ENCODE measurements at regions of chr1 and their contacts with region 1.

Region 1: GRCh38 chr1:228174482-228175375 is 9.1 kb downstream of the IBA57 start:
- DNase-seq: peak in 1 of 2 donors; percentile 66
- H3K4me3 ChIP-seq: no peak overlapping the region
- H3K27ac ChIP-seq: no peak overlapping the region
- H3K4me1 ChIP-seq: peaks cover 0 to 9% (median 3%) of the 10 kb centered on the region in 4 donors
- H3K27me3 ChIP-seq: no peaks in the 10 kb centered on the region
- CTCF ChIP-seq: no peak

Region 2: GRCh38 chr1:228275739-228276421 is 101.2 kb after region 1 on chr1:
- intact Hi-C with region 1: loop called (anchors 10 kb)
- DNase-seq: peak; percentile 92 to 93
- H3K4me3 ChIP-seq: peak overlapping the region; percentile 56 to 84
- H3K27ac ChIP-seq: peak overlapping the region; percentile 68 to 70
- H3K4me1 ChIP-seq: peaks cover 0 to 25% (median 11%) of the 10 kb centered on the region in 4 donors
- H3K27me3 ChIP-seq: no peaks in the 10 kb centered on the region
- CTCF ChIP-seq: no peak